ENCODE measurements at regions of chrX and their contacts with region 1.

Region 1: GRCh38 chrX:64975989-64976672 is at the start of gene ZC4H2:
- DNase-seq: peak; percentile 31 to 56
- H3K4me3 ChIP-seq: peak within 1 kb of the TSS; percentile 66 to 90 (median 76)
- H3K27ac ChIP-seq: peak within 1 kb of the TSS; percentile 52; the same call in 1 of the 2 replicates
- H3K4me1 ChIP-seq: no peaks in the 10 kb centered on the region; a peak in 1 of 7 replicates
- H3K27me3 ChIP-seq: no peaks in the 10 kb centered on the region
- CTCF ChIP-seq: no peak
- EP300 ChIP-seq: no peak
- POLR2A ChIP-seq: peak in 1 of 2 experiments; percentile 51; a peak in 1 of 3 replicates
- RAD21 ChIP-seq: no peak
- total RNA-seq, gene ZC4H2: 25.4 and 25.9 TPM in 2 replicates

Region 2: GRCh38 chrX:65034668-65035445 is 58.7 kb after region 1 on chrX:
- CTCF ChIA-PET with region 1: interaction called, 3 read pairs
- POLR2A ChIA-PET with region 1: interaction called, 10 read pairs
- DNase-seq: peak; percentile 61 to 79
- H3K4me3 ChIP-seq: peak within 1 kb of the TSS; percentile 55 to 78 (median 68)
- H3K27ac ChIP-seq: no peak within 1 kb of the TSS; the same call in 1 of the 2 replicates
- H3K4me1 ChIP-seq: no peaks in the 10 kb centered on the region; a peak in 1 of 7 replicates
- H3K27me3 ChIP-seq: no peaks in the 10 kb centered on the region
- CTCF ChIP-seq: peak; percentile 34 to 51 (median 51); a peak in 3 of 4 replicates
- EP300 ChIP-seq: no peak
- POLR2A ChIP-seq: peak in 1 of 2 experiments; percentile 47; a peak in 2 of 3 replicates
- RAD21 ChIP-seq: peak; percentile 47 to 61; a peak in 3 of 4 replicates

Measured in H1 (cell line).